Activated T-helper 1 cell treated with anti-CD3 and anti-CD28 coated beads, Interleukin-12 subunit alpha, Interleukin-12 subunit beta, Interleukin-2, Interleukin-4 antibody, amounts not matched to agents 30 ng/mL and 10 ng/mL and 1 ng/mL, durations not matched to agents 14 hours and 24 hours and 36 hours (primary cell): ENCODE measurements at regions of chr6 and their contacts with region 1.

Region 1: GRCh38 chr6:33248925-33249731 is 22.5 kb downstream of the VPS52 start:
- DNase-seq: peak; percentile 95
- H3K4me3 Mint-ChIP-seq: peak overlapping the region; percentile 91
- H3K27ac Mint-ChIP-seq: peak overlapping the region; percentile 84
- H3K4me1 Mint-ChIP-seq: peaks cover 44% of the 10 kb centered on the region
- H3K27me3 Mint-ChIP-seq: peaks cover 4% of the 10 kb centered on the region

Region 2: GRCh38 chr6:32894080-32895005 is 354.8 kb before region 1 on chr6:
- intact Hi-C with region 1: loop called (anchors 2 kb)
- DNase-seq: peak; percentile 95
- H3K4me3 Mint-ChIP-seq: peak overlapping the region; percentile 99
- H3K27ac Mint-ChIP-seq: peak overlapping the region; percentile 92
- H3K4me1 Mint-ChIP-seq: peaks cover 48% of the 10 kb centered on the region
- H3K27me3 Mint-ChIP-seq: peaks cover 12% of the 10 kb centered on the region

Region 3: GRCh38 chr6:33082702-33083101 is 166.4 kb before region 1 on chr6:
- intact Hi-C with region 1: loop called (anchors 2 kb)
- DNase-seq: no peak
- H3K4me3 Mint-ChIP-seq: no peak overlapping the region
- H3K27ac Mint-ChIP-seq: no peak overlapping the region
- H3K4me1 Mint-ChIP-seq: peaks cover 22% of the 10 kb centered on the region
- H3K27me3 Mint-ChIP-seq: peaks cover 2% of the 10 kb centered on the region

Region 4: GRCh38 chr6:33161354-33162331 is 87.5 kb before region 1 on chr6:
- intact Hi-C with region 1: loop called (anchors 1 kb)
- DNase-seq: peak; percentile 78
- H3K4me3 Mint-ChIP-seq: peak overlapping the region; percentile 80
- H3K27ac Mint-ChIP-seq: peak overlapping the region; percentile 65
- H3K4me1 Mint-ChIP-seq: peaks cover 10% of the 10 kb centered on the region
- H3K27me3 Mint-ChIP-seq: peaks cover 4% of the 10 kb centered on the region

Region 5: GRCh38 chr6:33271458-33272274 is 22.5 kb after region 1 on chr6 and contains the starts of genes RPS18 and VPS52:
- intact Hi-C with region 1: loop called (anchors 1 kb)
- DNase-seq: peak; percentile 89
- H3K4me3 Mint-ChIP-seq: peak within 1 kb of the TSS; percentile 97
- H3K27ac Mint-ChIP-seq: peak within 1 kb of the TSS; percentile 99
- H3K4me1 Mint-ChIP-seq: peaks cover 55% of the 10 kb centered on the region
- H3K27me3 Mint-ChIP-seq: no peaks in the 10 kb centered on the region
- total RNA-seq, gene RPS18: 2,930 and 2,946 TPM in 2 replicates
- total RNA-seq, gene VPS52: 59.8 and 63.5 TPM in 2 replicates

Region 6: DNA sequence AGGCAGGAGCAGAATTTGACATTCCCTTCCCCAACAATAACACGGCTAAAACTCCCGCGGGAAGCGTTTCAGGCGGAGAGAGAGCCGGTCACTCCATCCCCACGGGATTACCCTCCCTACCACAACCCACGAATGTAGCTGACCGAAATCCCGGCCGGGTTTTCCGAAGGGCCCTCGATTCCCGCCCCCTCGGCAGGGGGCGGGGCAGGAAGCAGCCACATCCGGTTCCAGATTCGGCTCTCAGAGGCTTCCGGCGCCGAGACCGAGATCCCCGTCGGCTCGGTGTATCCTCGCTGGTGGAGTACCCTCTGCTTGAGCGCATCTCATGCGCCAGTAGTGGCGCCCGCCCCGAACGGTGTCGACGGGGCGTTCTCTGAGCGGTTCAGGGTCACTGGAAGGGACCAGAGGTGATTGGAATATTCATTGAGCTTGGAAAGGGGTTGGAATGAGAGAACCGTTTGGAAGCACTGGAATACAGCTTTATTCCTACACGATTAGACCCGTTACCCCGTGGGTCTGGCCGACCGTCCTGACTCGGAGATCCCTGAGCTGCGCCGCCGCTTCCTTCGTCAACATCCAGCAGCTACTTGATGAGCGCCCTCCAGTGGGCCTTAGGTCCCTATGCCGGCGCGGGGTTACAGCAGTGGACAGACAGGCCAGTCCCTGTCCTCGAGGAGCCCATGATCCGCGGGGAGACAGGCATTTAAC is 50.3 kb after region 1 on chr6:
- intact Hi-C with region 1: loop called (anchors 1 kb)
- DNase-seq: peak; percentile 92
- H3K4me3 Mint-ChIP-seq: peak overlapping the region; percentile 95
- H3K27ac Mint-ChIP-seq: peak overlapping the region; percentile 99
- H3K4me1 Mint-ChIP-seq: peaks cover 38% of the 10 kb centered on the region
- H3K27me3 Mint-ChIP-seq: no peaks in the 10 kb centered on the region

Region 7: DNA sequence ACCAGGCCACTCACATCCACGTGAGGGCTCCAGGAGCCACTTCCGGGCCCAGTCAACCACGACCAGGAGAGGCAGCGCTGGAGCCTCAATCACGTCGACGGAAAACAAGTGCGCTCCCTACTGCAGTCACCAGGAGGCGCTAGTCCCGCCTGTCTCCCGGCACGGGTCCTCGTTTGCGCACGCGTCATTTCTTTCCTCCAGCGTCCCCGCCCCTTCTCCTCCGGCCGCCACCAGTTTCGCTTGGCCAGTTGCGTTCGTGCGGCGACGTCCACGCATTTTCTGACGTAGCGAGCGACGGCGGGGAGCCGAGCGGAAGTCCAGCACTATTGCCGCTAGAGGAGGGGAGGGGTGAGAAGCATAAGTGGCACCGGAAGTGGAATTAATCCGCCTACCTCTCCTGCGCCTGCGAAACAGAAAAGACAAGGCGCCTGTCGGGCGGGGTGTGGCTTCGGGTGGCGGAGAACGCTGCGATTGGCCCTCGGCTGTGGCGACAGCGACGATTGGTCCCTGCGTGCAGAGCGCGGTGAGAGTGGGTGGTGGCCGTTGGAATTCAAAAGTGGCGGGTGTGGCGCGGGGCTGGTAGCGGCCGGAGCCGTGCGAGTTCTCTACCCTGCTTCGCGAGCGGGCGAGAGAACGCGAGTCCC is 142.3 kb after region 1 on chr6 and contains the start of gene KIFC1:
- intact Hi-C with region 1: loop called (anchors 1 kb)
- DNase-seq: peak; percentile 99
- H3K4me3 Mint-ChIP-seq: peak within 1 kb of the TSS; percentile 84
- H3K27ac Mint-ChIP-seq: peak within 1 kb of the TSS; percentile 94
- H3K4me1 Mint-ChIP-seq: peaks cover 47% of the 10 kb centered on the region
- H3K27me3 Mint-ChIP-seq: peaks cover 2% of the 10 kb centered on the region
- total RNA-seq, gene KIFC1: 54.7 and 59.6 TPM in 2 replicates